Common myeloid progenitor, CD34-positive (primary cell): ENCODE measurements at regions of chr3 and their contacts with region 1.

Region 1: DNA sequence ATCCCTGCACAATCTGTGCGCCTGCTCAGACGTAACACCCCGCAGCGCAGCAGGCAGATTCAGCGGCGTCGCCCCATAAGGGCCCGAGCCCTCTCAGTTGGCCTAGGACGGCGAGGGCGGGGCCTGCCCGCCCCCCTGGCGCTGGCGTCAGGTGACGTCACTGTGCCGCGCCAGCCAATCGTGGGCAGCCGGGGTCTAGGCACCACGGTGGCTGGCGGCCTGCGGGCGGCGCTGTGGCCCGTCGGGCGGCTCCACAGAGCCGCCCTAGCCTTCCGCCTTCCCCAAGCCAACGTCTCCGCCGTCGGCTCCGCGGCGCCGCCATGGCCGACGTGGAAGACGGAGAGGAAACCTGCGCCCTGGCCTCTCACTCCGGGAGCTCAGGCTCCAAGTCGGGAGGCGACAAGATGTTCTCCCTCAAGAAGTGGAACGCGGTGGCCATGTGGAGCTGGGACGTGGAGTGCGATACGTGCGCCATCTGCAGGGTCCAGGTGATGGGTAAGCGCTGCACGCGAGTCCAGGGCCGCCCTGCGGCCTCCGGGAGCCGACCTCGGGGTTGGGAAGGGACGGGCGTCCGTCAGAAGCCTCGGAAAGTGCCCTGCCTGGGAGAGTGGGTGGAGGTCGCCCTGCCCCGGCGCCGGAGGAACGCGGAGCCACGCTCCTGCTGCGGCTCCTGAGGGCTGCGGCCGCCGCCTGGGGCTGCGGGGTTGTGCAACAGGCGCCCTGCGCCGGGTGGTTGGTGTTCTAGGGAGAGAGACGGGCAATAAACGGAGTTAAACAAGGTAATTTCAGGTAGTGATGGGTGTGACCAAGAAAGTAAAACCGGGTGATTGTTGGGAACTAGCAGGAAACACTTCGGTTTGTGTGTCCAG is at the start of gene RNF7:
- DNase-seq: peak; percentile 96 to 98 (median 98)
- H3K4me3 ChIP-seq: peak within 1 kb of the TSS; percentile 96 to 100 (median 99)
- H3K27ac ChIP-seq: peak within 1 kb of the TSS; percentile 78 to 95
- H3K4me1 ChIP-seq: peaks cover 18 to 45% (median 29%) of the 10 kb centered on the region in 4 experiments
- H3K27me3 ChIP-seq: no peaks in the 10 kb centered on the region

Region 2: DNA sequence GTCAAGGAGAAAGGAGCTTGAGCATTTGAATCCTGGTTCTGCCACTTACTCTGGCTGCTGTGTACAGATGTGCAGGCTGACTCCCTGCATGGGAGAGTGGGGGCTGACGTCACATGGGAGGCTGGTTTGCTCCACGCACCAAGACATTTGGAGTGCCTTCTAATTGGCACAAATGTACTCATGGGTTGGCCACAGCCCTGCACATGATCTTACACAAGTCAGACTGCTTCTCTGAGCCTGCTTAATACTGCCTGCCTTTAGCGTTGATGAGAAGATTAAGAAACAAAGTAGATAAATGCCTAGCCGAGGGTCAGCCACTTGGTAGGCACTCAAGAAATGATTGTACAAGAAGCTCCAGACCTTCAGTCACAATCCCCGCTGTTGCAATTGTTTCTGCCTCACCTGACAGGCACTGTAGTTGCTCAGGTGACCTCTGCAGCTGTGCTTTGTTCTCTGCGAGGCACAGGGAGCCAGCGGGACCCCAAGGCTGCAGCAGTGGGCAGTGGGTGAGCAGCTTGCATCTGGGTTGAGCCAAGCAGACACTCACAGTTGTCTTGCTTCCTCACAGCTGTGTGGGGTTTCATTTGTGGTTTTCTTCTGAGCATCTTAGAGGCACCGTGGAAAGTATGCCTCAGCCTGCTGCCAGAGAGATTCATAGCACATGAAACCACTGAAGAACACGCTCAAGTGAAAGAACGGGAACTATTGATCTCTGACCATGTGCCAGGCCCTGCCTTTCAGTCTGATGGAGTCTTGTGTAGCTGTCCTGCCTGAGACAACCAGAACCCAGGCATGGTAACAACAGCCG is 58.0 kb after region 1 on chr3:
- CTCF ChIA-PET with region 1: interaction called, 16 read pairs
- POLR2A ChIA-PET with region 1: interaction called, 4 read pairs
- DNase-seq: peak; percentile 88 to 99 (median 98)
- H3K4me3 ChIP-seq: peak overlapping the region in 5 of 7 experiments; percentile 1 to 68 (median 44)
- H3K27ac ChIP-seq: peak overlapping the region; percentile 61 to 77
- H3K4me1 ChIP-seq: peaks cover 7 to 62% (median 50%) of the 10 kb centered on the region in 4 experiments
- H3K27me3 ChIP-seq: no peaks in the 10 kb centered on the region

Region 3: DNA sequence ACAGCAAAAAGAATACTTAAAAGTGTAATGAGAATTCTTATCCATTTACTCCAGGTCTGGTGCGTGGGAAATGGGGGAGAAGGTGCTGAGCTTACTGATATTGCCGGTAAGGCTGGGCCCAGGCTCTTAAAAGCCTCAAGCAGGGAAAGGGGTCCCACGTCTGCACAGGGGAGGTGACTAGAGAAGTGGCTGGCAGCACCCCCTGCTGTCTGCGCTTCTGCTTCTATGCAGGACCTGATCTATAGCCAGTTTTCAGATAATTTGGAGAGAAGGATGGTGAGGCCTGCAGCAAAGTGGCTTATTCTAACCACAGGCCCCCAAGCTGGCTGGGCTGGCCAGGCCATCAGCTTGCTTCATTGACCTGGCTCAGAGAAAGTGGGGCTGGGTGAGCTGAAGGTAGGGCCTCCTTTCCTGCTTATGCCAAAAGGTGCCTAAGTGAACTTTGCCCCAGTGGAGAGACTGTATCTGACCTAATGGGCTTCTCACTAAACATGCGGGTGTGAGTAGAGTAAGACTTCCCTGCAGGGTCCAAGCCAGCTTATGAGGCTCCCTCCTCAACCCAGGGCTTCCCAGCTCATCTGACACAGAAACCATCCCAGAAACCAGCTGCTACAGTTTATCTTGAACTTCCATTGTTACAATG is 107.3 kb after region 1 on chr3:
- CTCF ChIA-PET with region 1: interaction called, 22 read pairs
- POLR2A ChIA-PET with region 1: no interaction called
- DNase-seq: peak; percentile 76 to 85 (median 84)
- H3K4me3 ChIP-seq: no peak overlapping the region
- H3K27ac ChIP-seq: no peak overlapping the region
- H3K4me1 ChIP-seq: peaks cover 2 to 16% (median 11%) of the 10 kb centered on the region in 4 experiments
- H3K27me3 ChIP-seq: no peaks in the 10 kb centered on the region

Region 4: DNA sequence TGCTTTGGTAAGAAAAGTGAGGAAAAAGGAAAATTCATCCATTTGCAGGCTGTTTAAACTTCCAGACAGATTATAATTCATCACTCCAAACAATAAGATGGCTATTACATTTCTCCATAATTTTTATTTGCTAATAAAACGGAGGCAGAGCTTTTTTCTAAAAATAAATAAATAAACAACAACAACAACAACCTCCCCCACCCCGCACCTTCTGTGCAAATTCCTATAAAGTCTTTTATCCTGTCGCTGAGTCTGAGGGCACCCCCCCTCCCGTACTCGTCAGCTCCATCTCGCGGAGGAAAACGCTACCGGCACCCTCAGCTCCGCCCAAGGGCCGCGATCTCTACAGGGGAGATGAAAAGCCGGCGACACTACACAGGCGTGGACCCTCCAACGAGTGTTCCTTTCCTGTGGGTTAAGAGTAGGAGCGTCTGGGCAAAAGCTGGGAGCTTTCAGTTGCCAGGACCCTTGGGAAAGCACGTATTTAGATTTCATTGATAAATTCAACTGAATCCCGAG is 137.2 kb after region 1 on chr3:
- CTCF ChIA-PET with region 1: interaction called, 22 read pairs
- POLR2A ChIA-PET with region 1: interaction called, 9 read pairs
- DNase-seq: peak; percentile 86 to 92 (median 92)
- H3K4me3 ChIP-seq: peak overlapping the region; percentile 73 to 91 (median 82)
- H3K27ac ChIP-seq: peak overlapping the region; percentile 50 to 88
- H3K4me1 ChIP-seq: peaks cover 6 to 25% (median 19%) of the 10 kb centered on the region in 4 experiments
- H3K27me3 ChIP-seq: no peaks in the 10 kb centered on the region

Region 5: GRCh38 chr3:141913150-141913811 is 175.0 kb after region 1 on chr3:
- CTCF ChIA-PET with region 1: interaction called, 22 read pairs
- POLR2A ChIA-PET with region 1: no interaction called
- DNase-seq: peak; percentile 71 to 87 (median 87)
- H3K4me3 ChIP-seq: no peak overlapping the region
- H3K27ac ChIP-seq: no peak overlapping the region
- H3K4me1 ChIP-seq: no peaks in the 10 kb centered on the region
- H3K27me3 ChIP-seq: no peaks in the 10 kb centered on the region